A673 (cell line): ENCODE measurements at regions of chr10 and their contacts with region 1.

Region 1: DNA sequence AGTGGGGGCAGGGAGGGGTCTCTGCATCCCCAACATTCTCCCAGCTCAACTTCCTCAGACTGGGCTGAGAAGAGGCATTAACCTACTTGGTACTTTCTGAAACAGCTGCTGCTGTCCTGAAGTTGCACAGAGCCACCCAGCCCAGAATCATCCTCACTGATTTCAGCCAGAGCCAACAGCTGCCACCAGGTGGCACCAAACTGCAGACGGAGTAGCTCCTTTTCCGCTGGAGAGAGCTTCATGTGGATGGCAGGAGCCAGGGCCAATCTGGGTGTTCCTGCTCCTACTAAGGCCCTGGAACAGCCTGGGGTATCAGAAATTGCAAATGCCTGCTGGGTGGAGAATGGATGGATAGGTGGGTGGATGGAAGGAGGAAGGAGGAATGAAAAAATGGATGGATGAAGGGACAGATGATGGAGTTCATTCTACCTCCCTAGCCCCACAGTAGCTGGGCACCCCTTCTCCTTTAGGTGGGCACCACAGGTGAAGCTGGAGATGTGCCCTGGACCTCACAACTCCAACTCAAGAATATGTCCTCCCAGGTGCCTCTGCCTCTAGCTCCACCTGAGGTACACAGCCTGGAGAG is 11.8 kb upstream of the DRGX start:
- DNase-seq: peak; percentile 79
- H3K4me3 ChIP-seq: no peak overlapping the region
- H3K27ac ChIP-seq: no peak overlapping the region
- H3K4me1 ChIP-seq: no peaks in the 10 kb centered on the region
- H3K27me3 ChIP-seq: peaks cover 77% of the 10 kb centered on the region
- CTCF ChIP-seq: peak; percentile 90

Region 2: DNA sequence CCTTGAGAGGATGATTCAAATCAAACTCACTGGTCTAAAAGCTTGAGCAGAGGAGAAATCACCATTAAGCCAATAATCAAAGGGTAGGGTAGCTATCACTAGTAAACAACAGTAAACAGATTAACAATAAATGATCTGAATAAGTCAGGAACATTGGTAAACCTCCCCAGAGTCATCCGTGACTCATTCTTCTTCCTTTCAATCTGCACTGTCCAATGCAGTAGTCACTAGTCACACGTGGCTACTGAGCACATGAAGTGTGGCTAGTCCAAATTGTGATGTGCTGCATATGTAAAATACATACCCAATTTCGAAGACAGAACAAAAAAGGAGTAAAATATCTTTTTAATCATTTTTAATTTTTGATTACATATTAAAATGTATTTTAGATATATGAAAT is 67.3 kb after region 1 on chr10:
- CTCF ChIA-PET with region 1: no interaction called
- POLR2A ChIA-PET with region 1: no interaction called
- intact Hi-C with region 1: no loop called
- DNase-seq: no peak
- H3K4me3 ChIP-seq: no peak overlapping the region
- H3K27ac ChIP-seq: no peak overlapping the region
- H3K4me1 ChIP-seq: no peaks in the 10 kb centered on the region
- H3K27me3 ChIP-seq: no peaks in the 10 kb centered on the region
- CTCF ChIP-seq: no peak

Region 3: DNA sequence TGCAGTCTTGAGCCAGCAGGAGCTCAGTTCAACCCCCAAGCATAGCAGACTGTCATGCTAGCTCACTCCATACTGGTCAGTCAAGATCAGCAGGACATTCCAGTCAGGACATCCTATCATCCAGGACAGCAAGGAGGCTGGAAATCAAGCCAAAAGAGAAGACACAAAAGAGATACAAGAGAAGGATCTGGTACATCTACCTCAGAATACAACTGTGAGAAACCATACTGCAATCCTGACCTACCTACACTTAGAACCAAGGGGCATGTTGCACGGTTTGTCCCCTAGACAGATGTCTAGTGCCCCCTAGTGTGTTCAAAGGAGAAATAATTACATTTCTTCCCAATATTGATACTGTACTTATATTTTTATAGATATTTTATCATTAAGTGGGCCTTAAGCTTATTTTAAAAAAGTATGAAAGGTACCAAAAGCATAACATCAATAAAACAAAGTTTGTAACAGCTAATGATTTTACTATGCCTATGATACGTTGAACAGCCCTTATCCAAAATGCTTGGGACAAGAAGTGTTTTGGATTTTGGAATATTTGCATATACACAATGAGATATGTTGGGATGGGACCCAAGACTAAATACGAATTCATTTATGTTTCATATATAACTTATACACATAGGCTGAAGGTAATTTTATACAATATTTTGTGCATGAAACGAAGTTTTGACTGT is 104.6 kb after region 1 on chr10:
- CTCF ChIA-PET with region 1: interaction called, 25 read pairs
- POLR2A ChIA-PET with region 1: no interaction called
- intact Hi-C with region 1: loop called (anchors 1 kb)
- DNase-seq: peak; percentile 55
- H3K4me3 ChIP-seq: no peak overlapping the region
- H3K27ac ChIP-seq: no peak overlapping the region
- H3K4me1 ChIP-seq: no peaks in the 10 kb centered on the region
- H3K27me3 ChIP-seq: no peaks in the 10 kb centered on the region
- CTCF ChIP-seq: peak; percentile 74

Region 4: DNA sequence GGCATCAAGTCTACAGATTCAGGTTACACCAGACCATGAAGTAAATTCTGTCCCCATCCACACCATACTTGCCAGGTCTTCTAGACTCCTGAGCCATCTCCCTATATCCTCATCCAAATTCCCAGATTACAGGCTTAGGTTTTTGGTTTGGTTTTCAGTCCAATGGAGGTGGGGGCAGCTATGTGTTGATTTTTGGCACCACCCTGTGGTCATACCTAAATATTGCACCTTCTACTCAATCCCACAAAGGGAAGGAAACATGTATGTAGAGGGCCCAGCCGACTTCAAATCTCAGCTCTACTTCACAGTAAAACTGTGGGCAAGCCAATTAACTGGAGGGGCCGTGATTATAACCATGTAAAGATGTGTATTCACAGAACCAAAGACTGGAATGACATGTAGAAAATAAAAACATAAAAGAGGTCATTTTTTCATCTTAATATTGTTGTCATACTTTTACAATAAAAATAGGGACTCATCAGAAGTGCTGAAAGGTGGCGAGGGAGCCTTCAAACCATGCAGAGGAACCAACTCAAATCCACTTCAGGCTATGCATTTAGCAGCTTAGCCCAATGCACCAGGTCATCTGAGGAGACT is 111.4 kb after region 1 on chr10:
- CTCF ChIA-PET with region 1: interaction called, 23 read pairs
- POLR2A ChIA-PET with region 1: no interaction called
- intact Hi-C with region 1: no loop called
- DNase-seq: peak; percentile 67
- H3K4me3 ChIP-seq: no peak overlapping the region
- H3K27ac ChIP-seq: no peak overlapping the region
- H3K4me1 ChIP-seq: no peaks in the 10 kb centered on the region
- H3K27me3 ChIP-seq: no peaks in the 10 kb centered on the region
- CTCF ChIP-seq: peak; percentile 74

Region 5: DNA sequence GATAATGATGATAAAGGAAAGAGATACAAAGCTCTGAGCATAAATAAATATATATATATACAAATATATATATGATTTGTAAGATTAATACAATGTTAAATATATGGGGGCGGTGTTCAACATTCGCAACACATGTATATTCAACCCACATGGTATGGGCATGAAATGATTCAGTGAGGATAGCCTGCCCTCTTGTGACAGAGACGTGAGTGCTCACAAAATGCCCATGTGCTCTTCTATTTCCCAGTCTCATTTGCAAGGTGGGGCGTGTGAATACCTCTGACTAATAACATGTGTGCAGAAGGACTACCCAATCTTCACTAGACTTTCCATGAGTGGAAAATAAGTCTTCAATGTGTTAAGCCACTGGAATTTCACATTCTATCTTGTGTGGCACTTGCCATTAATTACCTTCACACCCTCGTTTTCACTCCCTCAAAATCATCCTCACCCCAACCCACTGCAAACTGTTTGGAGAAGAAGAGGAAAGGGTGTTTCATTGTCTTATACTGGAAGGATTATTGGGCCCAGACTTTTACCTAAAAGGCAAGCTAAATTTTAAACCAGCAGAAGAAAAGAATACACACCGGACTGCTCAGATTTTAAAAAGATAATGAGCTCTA is 816.8 kb after region 1 on chr10:
- CTCF ChIA-PET with region 1: no interaction called
- POLR2A ChIA-PET with region 1: no interaction called
- intact Hi-C with region 1: loop called (anchors 10 kb)
- DNase-seq: peak; percentile 80
- H3K4me3 ChIP-seq: no peak overlapping the region
- H3K27ac ChIP-seq: no peak overlapping the region
- H3K4me1 ChIP-seq: no peaks in the 10 kb centered on the region
- H3K27me3 ChIP-seq: peaks cover 16% of the 10 kb centered on the region
- CTCF ChIP-seq: peak; percentile 78